Activated CD8-positive, alpha-beta memory T cell treated with anti-CD3 and anti-CD28 coated beads, Interleukin-2, amount 10 ng/mL, durations not matched to agents 7 days and 5 days (primary cell): ENCODE measurements at regions of chr3 and their contacts with region 1.

Region 1: GRCh38 chr3:98525494-98525893 is 2.8 kb upstream of the CLDND1 start:
- DNase-seq: peak; percentile 74
- ATAC-seq: no peak
- H3K4me3 Mint-ChIP-seq: peak overlapping the region; percentile 59
- H3K27ac Mint-ChIP-seq: peak overlapping the region; percentile 73
- H3K4me1 Mint-ChIP-seq: peaks cover 64% of the 10 kb centered on the region
- H3K27me3 Mint-ChIP-seq: no peaks in the 10 kb centered on the region

Region 2: DNA sequence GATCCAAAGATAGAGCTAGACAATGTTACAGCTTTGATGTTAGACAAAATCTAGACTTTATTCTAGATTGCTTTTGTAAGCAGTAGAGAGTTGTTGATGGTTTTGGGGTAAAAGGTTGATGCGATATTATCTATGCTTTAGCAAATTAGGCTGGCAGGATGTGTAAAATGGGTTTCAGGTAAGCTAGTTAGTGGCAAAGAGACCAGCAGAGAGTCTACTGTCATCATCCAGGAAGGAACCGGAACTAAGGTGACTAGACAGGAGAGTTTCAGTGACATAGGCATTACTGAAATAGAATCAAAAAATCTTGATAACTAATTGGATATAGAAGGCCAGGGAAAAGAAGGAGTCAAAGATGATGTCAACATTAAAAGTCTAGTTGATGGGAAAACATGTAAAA is 16.9 kb before region 1 on chr3:
- CTCF ChIA-PET with region 1: no interaction called
- DNase-seq: no peak
- ATAC-seq: no peak
- H3K4me3 Mint-ChIP-seq: no peak overlapping the region
- H3K27ac Mint-ChIP-seq: peak overlapping the region; percentile 38
- H3K4me1 Mint-ChIP-seq: peaks cover 32% of the 10 kb centered on the region
- H3K27me3 Mint-ChIP-seq: no peaks in the 10 kb centered on the region

Region 3: GRCh38 chr3:98563661-98564281 is 38.3 kb after region 1 on chr3:
- CTCF ChIA-PET with region 1: interaction called, 10 read pairs
- DNase-seq: no peak
- ATAC-seq: peak; percentile 9
- H3K4me3 Mint-ChIP-seq: peak overlapping the region; percentile 40
- H3K27ac Mint-ChIP-seq: peak overlapping the region; percentile 95
- H3K4me1 Mint-ChIP-seq: peaks cover 88% of the 10 kb centered on the region
- H3K27me3 Mint-ChIP-seq: no peaks in the 10 kb centered on the region

Region 4: GRCh38 chr3:98770261-98771039 is 245.0 kb after region 1 on chr3:
- CTCF ChIA-PET with region 1: no interaction called
- DNase-seq: peak; percentile 44
- ATAC-seq: peak; percentile 39
- H3K4me3 Mint-ChIP-seq: no peak overlapping the region
- H3K27ac Mint-ChIP-seq: no peak overlapping the region
- H3K4me1 Mint-ChIP-seq: peaks cover 8% of the 10 kb centered on the region
- H3K27me3 Mint-ChIP-seq: peaks cover 36% of the 10 kb centered on the region